CD4-positive, alpha-beta memory T cell (primary cell): ENCODE measurements at regions of chr2 and their contacts with region 1.

Region 1: GRCh38 chr2:197191177-197191939 is 119.2 kb downstream of the ANKRD44 start:
- DNase-seq: peak in 4 of 5 donors; percentile 69 to 75 (median 74)
- H3K4me3 ChIP-seq: no peak overlapping the region
- H3K4me3 Mint-ChIP-seq: peak overlapping the region in 7 of 8 donors; percentile 27 to 73 (median 60)
- H3K27ac ChIP-seq: peak overlapping the region; percentile 77
- H3K27ac Mint-ChIP-seq: peak overlapping the region; percentile 64 to 93 (median 89)
- H3K4me1 ChIP-seq: peaks cover 90% of the 10 kb centered on the region
- H3K4me1 Mint-ChIP-seq: peaks cover 64 to 85% (median 73%) of the 10 kb centered on the region in 4 donors
- H3K27me3 ChIP-seq: no peaks in the 10 kb centered on the region
- H3K27me3 Mint-ChIP-seq: no peaks in the 10 kb centered on the region

Region 2: GRCh38 chr2:197028230-197028629 is 163.1 kb before region 1 on chr2:
- CTCF ChIA-PET with region 1: no interaction called
- POLR2A ChIA-PET with region 1: no interaction called
- intact Hi-C with region 1: no loop called
- DNase-seq: no peak
- H3K4me3 ChIP-seq: no peak overlapping the region
- H3K4me3 Mint-ChIP-seq: no peak overlapping the region
- H3K27ac ChIP-seq: no peak overlapping the region
- H3K27ac Mint-ChIP-seq: peak overlapping the region; percentile 8 to 86 (median 57)
- H3K4me1 ChIP-seq: peaks cover 15% of the 10 kb centered on the region
- H3K4me1 Mint-ChIP-seq: peaks cover 14 to 27% (median 25%) of the 10 kb centered on the region in 4 donors
- H3K27me3 ChIP-seq: no peaks in the 10 kb centered on the region
- H3K27me3 Mint-ChIP-seq: no peaks in the 10 kb centered on the region

Region 3: DNA sequence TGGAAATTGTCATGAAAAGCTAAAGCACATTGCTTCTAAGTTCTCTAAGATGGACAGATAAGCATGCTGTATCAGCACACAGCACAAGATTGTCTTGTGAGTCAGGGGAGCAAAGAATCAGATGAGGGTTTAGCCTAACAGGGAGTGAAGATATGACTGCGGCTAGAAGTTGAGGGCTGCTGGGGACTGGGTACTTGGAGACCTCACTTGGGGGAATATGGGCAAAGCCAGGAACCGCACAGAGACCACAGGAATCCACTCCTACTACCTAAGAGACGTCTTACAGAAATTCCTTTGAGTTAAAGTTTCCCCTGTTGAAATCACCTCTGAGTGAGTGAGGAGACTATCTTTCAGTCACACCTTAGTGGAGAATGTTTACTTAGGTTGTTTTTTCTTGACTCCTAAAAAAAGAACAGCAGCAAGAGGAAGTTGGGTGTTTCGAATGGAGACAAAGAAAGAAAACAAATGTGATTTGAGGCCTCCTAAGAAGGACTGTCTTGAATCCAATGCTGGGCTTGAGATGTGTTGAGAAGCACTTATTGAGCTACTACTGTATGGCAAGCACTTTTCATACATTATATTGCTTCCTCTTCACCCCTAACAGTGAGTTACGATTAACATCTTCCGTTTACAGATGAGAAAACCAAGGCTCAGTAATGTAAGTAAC is 18.5 kb after region 1 on chr2:
- CTCF ChIA-PET with region 1: interaction called, 15 read pairs
- POLR2A ChIA-PET with region 1: interaction called, 1,394 read pairs
- intact Hi-C with region 1: loop called (anchors 2 kb)
- DNase-seq: peak in 4 of 5 donors; percentile 37 to 86 (median 40)
- H3K4me3 ChIP-seq: peak overlapping the region in 1 of 2 donors; percentile 12
- H3K4me3 Mint-ChIP-seq: peak overlapping the region; percentile 38 to 88 (median 74)
- H3K27ac ChIP-seq: peak overlapping the region; percentile 68
- H3K27ac Mint-ChIP-seq: peak overlapping the region; percentile 88 to 100 (median 98)
- H3K4me1 ChIP-seq: peaks cover 100% of the 10 kb centered on the region
- H3K4me1 Mint-ChIP-seq: peaks cover 84 to 100% (median 93%) of the 10 kb centered on the region in 4 donors
- H3K27me3 ChIP-seq: no peaks in the 10 kb centered on the region
- H3K27me3 Mint-ChIP-seq: peaks cover 0 to 3% of the 10 kb centered on the region in 2 donors

Region 4: GRCh38 chr2:197239434-197239833 is 48.1 kb after region 1 on chr2:
- CTCF ChIA-PET with region 1: interaction called, 13 read pairs
- POLR2A ChIA-PET with region 1: interaction called, 1,394 read pairs
- intact Hi-C with region 1: no loop called
- DNase-seq: no peak
- H3K4me3 ChIP-seq: peak overlapping the region in 1 of 2 donors; percentile 52
- H3K4me3 Mint-ChIP-seq: peak overlapping the region; percentile 80 to 96 (median 87)
- H3K27ac ChIP-seq: peak overlapping the region; percentile 66
- H3K27ac Mint-ChIP-seq: peak overlapping the region; percentile 87 to 99 (median 95)
- H3K4me1 ChIP-seq: peaks cover 97% of the 10 kb centered on the region
- H3K4me1 Mint-ChIP-seq: peaks cover 70 to 93% (median 78%) of the 10 kb centered on the region in 4 donors
- H3K27me3 ChIP-seq: no peaks in the 10 kb centered on the region
- H3K27me3 Mint-ChIP-seq: no peaks in the 10 kb centered on the region

Region 5: DNA sequence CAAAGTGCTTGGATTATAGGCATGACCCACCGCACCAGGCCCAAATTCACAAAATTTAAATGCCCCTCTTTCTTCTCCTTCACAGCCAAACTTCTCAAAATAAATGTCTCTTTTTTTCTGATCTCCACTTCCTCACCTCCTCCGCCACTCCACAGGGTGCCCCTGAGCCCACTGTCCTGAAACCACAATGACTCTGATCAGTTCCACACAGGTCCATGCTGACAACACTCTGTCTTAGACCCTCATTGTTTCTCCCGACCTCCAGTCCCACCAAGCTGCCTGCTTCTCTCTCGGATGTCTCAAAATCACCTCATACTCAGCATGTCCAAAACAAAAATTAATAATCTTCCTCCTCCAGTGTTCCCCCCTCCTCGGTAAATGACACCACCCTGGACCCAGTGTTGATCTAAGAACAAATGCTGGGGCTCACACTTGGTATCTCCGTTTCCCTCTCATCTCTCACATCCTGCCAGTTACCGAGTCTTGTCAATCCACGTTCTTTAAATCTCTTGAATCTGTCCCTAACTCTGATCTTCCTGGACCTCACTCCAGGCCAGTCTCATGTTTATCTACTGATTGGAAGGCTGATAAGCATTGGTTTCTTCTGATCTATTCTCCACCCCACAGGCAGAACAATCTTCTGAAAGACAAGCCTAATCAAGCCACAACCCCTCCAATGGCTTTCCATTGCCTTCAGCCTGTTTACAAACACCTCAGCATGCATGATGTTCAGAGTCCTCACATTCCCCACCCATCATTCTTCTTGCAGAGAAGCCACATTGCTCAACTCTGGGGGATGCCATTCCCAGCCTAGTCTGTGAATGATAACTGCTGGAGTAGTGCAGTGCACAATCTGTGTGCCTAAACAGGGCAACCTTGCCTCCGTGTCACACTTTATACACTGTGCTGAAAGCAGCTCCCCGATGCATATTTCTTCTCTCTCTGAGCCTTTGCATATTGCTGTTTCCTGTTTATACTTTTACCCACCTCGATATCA is 131.7 kb after region 1 on chr2:
- CTCF ChIA-PET with region 1: interaction called, 10 read pairs
- POLR2A ChIA-PET with region 1: interaction called, 8 read pairs
- intact Hi-C with region 1: no loop called
- DNase-seq: peak in 3 of 5 donors; percentile 36 to 41 (median 36)
- H3K4me3 ChIP-seq: peak overlapping the region; percentile 44 to 48
- H3K4me3 Mint-ChIP-seq: peak overlapping the region; percentile 49 to 86 (median 76)
- H3K27ac ChIP-seq: peak overlapping the region; percentile 36
- H3K27ac Mint-ChIP-seq: peak overlapping the region; percentile 82 to 97 (median 94)
- H3K4me1 ChIP-seq: peaks cover 67% of the 10 kb centered on the region
- H3K4me1 Mint-ChIP-seq: peaks cover 40 to 71% (median 61%) of the 10 kb centered on the region in 4 donors
- H3K27me3 ChIP-seq: no peaks in the 10 kb centered on the region
- H3K27me3 Mint-ChIP-seq: no peaks in the 10 kb centered on the region